H1 (cell line): ENCODE measurements at regions of chr22 and their contacts with region 1.

Region 1: DNA sequence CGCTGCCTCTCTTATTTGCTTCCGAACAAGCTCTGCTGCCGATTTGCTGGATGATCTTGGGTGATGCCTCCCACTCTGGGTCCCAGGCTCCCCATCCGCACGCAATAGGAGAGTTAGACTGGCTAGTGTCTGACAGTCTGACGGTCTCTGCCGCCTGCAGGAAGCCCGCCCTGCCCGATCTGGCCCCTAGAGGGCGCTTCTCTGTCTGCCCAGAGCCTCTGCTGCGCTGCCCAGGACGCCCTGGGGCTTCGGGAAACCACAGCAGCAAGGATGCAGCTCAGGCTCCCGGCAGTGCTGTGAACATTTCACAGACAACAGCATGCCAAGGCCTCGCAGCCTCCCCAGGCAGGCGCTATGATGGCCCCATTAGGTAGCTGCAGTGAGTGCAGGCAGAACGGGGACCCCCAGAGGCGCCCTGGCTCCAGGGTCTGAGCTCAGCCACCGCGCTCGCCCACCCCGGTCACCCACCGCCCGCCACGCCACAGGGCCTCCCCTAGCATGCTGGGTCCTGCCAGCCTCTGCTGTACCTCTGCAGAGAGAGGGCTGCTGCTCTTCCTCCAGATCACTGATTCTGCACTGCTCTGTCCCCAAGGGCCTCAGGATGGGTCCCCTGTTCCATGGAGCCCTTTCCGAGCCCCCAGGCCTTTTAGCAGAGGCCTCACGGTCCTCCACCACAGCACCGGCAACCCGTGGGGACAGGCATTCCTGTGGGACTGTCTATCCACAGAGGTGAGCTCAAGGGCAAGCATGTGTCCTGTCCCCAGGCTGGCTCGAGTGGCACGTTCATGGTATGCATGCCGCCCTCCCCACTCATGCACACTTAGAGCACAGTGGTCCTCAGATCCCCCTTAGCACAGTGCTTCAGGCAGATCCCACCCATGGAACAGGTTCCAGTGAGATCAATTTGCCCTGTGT is 4.3 kb upstream of the BAIAP2L2 start:
- DNase-seq: peak in 1 of 2 experiments; percentile 99
- H3K4me3 ChIP-seq: no peak overlapping the region
- H3K27ac ChIP-seq: no peak overlapping the region
- H3K4me1 ChIP-seq: peaks cover 0 to 9% (median 7%) of the 10 kb centered on the region in 4 experiments; a peak in 3 of 7 replicates
- H3K27me3 ChIP-seq: no peaks in the 10 kb centered on the region; a peak in 2 of 7 replicates
- CTCF ChIP-seq: peak; percentile 93 to 98 (median 98)
- EP300 ChIP-seq: no peak; a peak in 1 of 3 replicates
- POLR2A ChIP-seq: no peak
- RAD21 ChIP-seq: peak; percentile 70 to 81

Region 2: DNA sequence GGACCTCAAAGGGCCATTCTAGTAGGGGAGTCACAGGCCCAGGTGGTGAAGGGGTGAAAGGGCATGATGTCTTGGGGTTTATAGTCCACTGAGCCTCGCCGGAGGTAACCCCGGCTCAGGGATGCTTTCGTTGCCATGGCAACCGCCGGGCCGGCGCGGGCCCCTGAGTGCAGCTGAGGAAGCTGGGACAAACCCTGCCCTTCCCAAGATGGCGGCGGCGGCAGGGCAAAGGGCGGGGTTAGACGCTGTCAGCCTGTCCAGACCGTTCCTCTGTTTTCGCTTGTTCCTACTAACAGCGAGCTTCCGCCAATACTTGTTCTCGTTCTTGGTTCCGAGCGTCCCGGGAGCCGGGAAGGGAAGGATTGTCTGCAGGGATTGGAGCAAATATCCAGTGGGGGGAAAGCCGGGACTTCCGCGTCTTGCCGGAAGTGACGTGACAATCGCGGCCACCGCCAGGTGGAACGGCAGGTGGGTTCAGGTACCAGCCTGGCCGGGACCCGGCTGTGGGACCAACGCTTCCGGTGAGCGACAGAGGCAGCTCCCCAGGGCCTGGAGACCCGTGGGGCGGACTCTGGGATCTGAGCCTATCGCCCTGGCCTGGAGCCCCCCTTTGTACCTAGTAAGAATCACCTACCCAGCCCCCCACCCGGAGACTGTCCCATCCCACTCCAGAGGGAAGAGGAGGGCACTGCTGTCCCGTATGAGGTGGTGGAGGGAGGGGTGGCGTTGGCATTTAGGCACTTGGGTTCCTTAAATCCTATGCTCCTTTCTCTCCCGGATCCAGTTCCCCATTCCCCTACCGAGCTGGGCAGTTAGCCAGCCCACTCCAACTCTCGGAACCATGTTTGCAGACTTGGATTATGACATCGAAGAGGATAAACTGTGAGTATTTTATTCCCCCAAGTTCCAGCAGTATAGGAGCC is 57.5 kb before region 1 on chr22 and contains the start of gene PICK1:
- CTCF ChIA-PET with region 1: interaction called, 14 read pairs
- POLR2A ChIA-PET with region 1: no interaction called
- DNase-seq: peak; percentile 63 to 96
- H3K4me3 ChIP-seq: peak within 1 kb of the TSS; percentile 70 to 95 (median 80)
- H3K27ac ChIP-seq: peak within 1 kb of the TSS; percentile 95
- H3K4me1 ChIP-seq: peaks cover 0 to 16% (median 6%) of the 10 kb centered on the region in 4 experiments; a peak in 6 of 7 replicates
- H3K27me3 ChIP-seq: no peaks in the 10 kb centered on the region; a peak in 1 of 7 replicates
- CTCF ChIP-seq: no peak
- EP300 ChIP-seq: no peak
- POLR2A ChIP-seq: peak in 1 of 2 experiments; percentile 88; a peak in 2 of 3 replicates
- RAD21 ChIP-seq: no peak
- total RNA-seq, gene PICK1: 22.9 and 26.2 TPM in 2 replicates

Region 3: GRCh38 chr22:38104084-38104483 is 10.7 kb before region 1 on chr22:
- CTCF ChIA-PET with region 1: interaction called, 194 read pairs
- POLR2A ChIA-PET with region 1: interaction called, 4 read pairs
- DNase-seq: peak in 1 of 2 experiments; percentile 65
- H3K4me3 ChIP-seq: no peak overlapping the region
- H3K27ac ChIP-seq: no peak overlapping the region
- H3K4me1 ChIP-seq: no peaks in the 10 kb centered on the region
- H3K27me3 ChIP-seq: no peaks in the 10 kb centered on the region
- CTCF ChIP-seq: peak; percentile 72 to 81 (median 80)
- EP300 ChIP-seq: no peak
- POLR2A ChIP-seq: no peak
- RAD21 ChIP-seq: peak; percentile 63 to 72

Region 4: GRCh38 chr22:38143036-38143697 is 28.4 kb after region 1 on chr22:
- CTCF ChIA-PET with region 1: interaction called, 64 read pairs
- POLR2A ChIA-PET with region 1: no interaction called
- DNase-seq: no peak
- H3K4me3 ChIP-seq: no peak overlapping the region
- H3K27ac ChIP-seq: no peak overlapping the region
- H3K4me1 ChIP-seq: peaks cover 0 to 3% (median 0%) of the 10 kb centered on the region in 4 experiments; a peak in 3 of 7 replicates
- H3K27me3 ChIP-seq: no peaks in the 10 kb centered on the region
- CTCF ChIP-seq: no peak
- EP300 ChIP-seq: no peak
- POLR2A ChIP-seq: no peak
- RAD21 ChIP-seq: no peak

Region 5: DNA sequence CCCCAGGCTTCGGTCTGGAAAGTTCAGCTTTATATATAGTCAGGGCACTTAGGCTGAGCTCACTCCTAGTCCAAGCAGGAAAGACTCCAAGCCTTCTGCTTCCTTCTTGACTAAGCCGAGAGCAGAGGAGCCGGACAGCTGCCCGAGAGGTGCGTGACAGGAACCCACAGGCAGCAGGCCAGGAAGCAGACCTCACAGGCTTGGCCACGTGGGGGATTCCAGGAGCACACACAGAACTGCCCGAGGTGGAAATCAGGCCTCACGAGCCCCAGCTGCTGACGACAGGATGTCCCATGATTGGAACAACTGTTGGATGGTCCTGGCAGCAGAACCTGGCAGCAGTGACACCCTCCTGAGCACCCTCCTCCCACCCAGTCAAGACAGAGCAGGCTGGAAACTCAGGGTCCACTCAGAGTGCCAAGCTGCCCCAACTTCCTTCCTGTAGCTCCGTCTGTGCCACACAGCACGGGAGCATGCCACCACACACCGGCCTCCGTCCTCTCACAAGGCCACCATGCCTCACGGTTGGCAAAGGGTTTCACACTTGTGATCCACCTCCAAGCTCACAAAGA is 61.5 kb after region 1 on chr22:
- CTCF ChIA-PET with region 1: interaction called, 10 read pairs
- POLR2A ChIA-PET with region 1: no interaction called
- DNase-seq: no peak
- H3K4me3 ChIP-seq: no peak overlapping the region
- H3K27ac ChIP-seq: no peak overlapping the region
- H3K4me1 ChIP-seq: peaks cover 0 to 16% (median 8%) of the 10 kb centered on the region in 4 experiments; a peak in 6 of 7 replicates
- H3K27me3 ChIP-seq: no peaks in the 10 kb centered on the region
- CTCF ChIP-seq: no peak
- EP300 ChIP-seq: no peak
- POLR2A ChIP-seq: no peak
- RAD21 ChIP-seq: no peak

Region 6: DNA sequence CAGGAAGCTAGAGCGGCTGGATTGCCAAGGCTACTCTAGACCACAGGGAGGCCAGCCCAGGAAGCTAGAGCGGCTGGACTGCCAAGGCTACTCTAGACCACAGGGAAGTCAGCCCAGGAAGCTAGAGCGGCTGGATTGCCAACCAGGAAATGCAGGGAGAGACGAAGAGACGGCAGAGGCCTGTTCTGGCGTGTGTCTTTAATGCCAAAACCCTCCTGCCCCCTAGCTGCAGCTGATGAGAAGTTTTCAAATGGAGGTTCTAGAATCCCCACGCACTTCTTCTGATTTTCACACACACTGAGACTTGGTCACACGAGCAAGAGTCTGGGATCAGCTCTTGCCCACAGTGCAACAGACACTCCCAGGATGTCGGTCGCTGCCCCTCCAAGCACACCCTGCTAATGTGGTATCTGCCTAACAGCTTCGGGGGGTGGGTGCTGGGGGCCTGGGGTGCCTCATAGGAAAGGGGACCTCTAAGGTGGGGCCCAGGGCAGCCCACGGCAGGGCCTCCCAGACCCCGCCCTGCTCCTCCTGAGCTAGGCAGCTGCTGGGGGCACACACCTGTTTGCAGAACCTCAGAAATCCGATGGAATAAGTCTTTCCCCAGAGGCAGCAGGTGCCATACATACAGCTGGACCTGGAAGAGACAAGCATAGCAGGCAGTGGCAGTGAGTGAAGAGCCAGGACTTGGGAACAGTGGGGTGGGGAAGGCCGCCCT is 115.5 kb after region 1 on chr22:
- CTCF ChIA-PET with region 1: interaction called, 11 read pairs
- POLR2A ChIA-PET with region 1: no interaction called
- DNase-seq: no peak
- H3K4me3 ChIP-seq: no peak overlapping the region
- H3K27ac ChIP-seq: no peak overlapping the region
- H3K4me1 ChIP-seq: no peaks in the 10 kb centered on the region
- H3K27me3 ChIP-seq: no peaks in the 10 kb centered on the region; a peak in 1 of 7 replicates
- CTCF ChIP-seq: peak; percentile 45 to 65 (median 55)
- EP300 ChIP-seq: no peak
- POLR2A ChIP-seq: no peak
- RAD21 ChIP-seq: peak; percentile 69